Activated naive CD4-positive, alpha-beta T cell treated with anti-CD3 and anti-CD28 coated beads, Interleukin-2, amount 10 ng/mL, durations not matched to agents 7 days and 5 days (primary cell): ENCODE measurements at regions of chr10 and their contacts with region 1.

Region 1: DNA sequence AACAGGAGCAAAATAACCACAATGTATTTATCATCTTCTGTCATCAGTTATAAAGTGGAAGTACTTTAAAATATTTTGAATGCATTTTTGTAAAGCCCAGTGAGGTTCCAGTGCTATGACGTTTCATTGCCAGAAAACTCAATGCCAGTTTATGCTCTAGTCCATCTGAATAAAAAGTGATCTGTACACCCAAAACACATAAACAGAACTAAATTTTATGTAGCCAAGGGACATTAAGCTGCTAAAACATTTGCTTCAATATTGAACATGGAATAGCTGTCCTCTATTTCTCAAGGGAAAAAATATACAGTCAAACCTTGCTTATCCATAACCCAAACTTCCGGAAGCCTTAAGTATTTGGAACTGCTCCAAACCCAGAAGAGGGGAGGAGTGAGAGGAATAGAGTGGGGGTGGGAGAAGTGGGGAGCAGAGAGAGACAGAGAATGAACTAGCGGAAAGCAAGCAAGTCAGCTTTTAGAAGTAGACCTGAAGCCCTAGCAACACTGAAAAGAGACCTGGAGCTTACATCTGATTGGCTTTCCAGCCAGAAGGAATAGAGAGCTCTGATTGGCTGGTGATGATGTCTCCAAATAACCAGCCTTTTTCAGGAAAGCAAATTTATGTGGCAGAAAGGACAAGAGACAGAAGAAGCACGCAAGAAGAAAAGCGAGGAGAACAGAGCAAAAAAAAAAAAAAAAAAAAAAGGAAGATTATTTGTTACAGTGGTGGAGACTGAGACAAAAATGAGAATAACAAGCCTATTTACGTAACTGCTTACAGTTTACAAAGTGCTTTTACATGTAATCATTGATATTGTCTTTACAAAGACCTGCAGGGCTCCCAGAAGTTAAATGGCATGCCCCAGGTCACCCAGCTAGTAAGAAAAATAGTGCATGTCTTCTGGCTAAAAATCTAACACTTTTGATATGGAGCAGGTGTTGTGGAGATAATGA is 196.0 kb downstream of the RNLS start:
- DNase-seq: no peak
- H3K4me3 Mint-ChIP-seq: no peak overlapping the region
- H3K27ac Mint-ChIP-seq: no peak overlapping the region
- H3K4me1 Mint-ChIP-seq: peaks cover 24% of the 10 kb centered on the region
- H3K27me3 Mint-ChIP-seq: no peaks in the 10 kb centered on the region

Region 2: DNA sequence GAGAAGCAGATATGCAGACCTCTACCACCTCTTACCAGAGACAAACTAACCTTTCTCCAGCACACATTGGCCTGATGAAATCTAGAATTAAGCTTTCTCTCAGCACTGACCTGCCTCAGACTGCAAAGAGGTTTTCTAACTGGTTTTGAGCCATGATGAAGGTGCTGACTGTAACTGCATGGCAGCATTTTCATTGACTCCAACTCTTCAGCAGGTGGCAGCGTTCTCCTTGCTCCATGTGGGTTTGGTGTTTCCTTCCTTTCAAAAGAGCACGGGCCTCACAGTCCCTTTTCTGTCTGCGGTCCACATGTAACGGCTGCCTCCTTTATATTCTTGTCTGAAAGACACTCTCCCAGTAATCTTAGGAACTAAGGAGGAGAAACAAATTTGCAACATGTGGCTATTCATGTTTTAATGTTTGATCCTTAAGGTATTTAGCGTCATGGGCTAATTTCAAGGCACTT is 536.3 kb before region 1 on chr10:
- CTCF ChIA-PET with region 1: interaction called, 11 read pairs
- DNase-seq: peak; percentile 70
- H3K4me3 Mint-ChIP-seq: no peak overlapping the region
- H3K27ac Mint-ChIP-seq: no peak overlapping the region
- H3K4me1 Mint-ChIP-seq: peaks cover 15% of the 10 kb centered on the region
- H3K27me3 Mint-ChIP-seq: no peaks in the 10 kb centered on the region

Region 3: GRCh38 chr10:87861953-87862678 is 525.0 kb before region 1 on chr10:
- CTCF ChIA-PET with region 1: interaction called, 52 read pairs
- DNase-seq: peak; percentile 96
- H3K4me3 Mint-ChIP-seq: peak overlapping the region; percentile 93
- H3K27ac Mint-ChIP-seq: peak overlapping the region; percentile 97
- H3K4me1 Mint-ChIP-seq: peaks cover 31% of the 10 kb centered on the region
- H3K27me3 Mint-ChIP-seq: peaks cover 11% of the 10 kb centered on the region

Region 4: DNA sequence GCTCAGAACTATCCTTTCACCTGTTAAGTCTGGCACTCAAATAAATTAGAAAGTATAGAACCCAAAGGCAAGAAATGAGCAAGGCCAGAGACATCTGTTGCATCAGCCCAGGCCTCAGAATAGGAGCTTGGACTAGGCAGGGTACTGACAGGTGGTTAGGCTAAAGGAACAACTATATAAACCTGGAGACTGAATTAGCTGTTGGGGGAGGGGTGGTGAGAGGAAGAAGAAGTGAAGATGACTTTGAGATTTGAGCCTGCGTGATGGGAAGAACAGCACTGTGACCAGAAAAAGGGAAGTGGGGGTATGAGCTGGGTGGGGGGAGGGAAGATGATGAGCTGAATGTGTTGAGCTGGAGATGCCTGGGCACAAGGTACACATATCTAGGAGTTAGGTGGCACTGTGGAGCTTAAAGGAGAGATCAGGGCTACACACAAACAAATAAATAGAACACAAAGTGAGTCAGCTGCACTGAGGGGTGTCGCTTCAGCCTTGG is 278.9 kb before region 1 on chr10:
- CTCF ChIA-PET with region 1: interaction called, 21 read pairs
- DNase-seq: no peak
- H3K4me3 Mint-ChIP-seq: no peak overlapping the region
- H3K27ac Mint-ChIP-seq: no peak overlapping the region
- H3K4me1 Mint-ChIP-seq: peaks cover 10% of the 10 kb centered on the region
- H3K27me3 Mint-ChIP-seq: peaks cover 4% of the 10 kb centered on the region

Region 5: GRCh38 chr10:88114368-88114767 is 272.7 kb before region 1 on chr10:
- CTCF ChIA-PET with region 1: interaction called, 27 read pairs
- DNase-seq: peak; percentile 34
- H3K4me3 Mint-ChIP-seq: no peak overlapping the region
- H3K27ac Mint-ChIP-seq: no peak overlapping the region
- H3K4me1 Mint-ChIP-seq: peaks cover 14% of the 10 kb centered on the region
- H3K27me3 Mint-ChIP-seq: no peaks in the 10 kb centered on the region

Region 6: DNA sequence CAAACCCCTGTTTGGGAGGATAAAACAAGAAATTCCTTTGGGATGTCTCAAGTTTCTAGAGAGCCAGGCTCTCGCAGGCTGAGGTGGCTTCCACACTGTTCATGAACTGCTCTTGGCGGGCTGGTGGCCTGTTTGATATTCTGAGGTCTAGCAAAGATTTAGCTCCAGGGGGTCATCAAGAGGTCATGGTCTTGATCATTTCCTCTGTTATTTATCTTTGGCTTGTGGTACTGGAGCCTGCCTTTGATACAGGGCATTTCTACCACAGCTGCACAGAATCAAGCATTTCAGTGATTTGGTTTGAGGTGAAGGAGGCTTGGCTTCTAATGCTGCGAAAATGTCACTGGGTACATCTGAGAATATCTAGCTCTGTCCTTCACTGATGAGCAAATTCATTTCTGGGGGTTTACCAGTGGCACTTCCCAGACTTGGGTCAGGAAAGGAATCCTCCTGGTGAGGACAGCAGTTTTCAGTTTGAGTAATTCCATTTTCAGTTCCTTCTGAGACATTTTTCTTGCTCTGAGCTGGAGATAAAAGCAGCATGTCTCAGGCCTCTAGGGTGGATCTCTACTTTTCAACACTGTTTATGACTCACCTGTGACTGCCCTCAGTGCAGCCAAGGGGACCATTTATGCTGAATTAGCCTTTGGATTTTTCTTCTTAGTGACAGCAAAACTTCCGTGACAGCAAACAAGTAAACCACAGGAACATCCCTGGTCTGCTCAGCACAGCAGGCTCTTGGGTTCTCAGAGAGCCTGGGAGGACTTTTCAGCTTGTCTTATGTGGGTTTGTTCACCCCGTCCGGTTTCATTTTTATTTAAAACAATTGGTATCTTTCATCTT is 116.0 kb before region 1 on chr10:
- CTCF ChIA-PET with region 1: interaction called, 21 read pairs
- DNase-seq: peak; percentile 69
- H3K4me3 Mint-ChIP-seq: peak overlapping the region; percentile 9
- H3K27ac Mint-ChIP-seq: peak overlapping the region; percentile 93
- H3K4me1 Mint-ChIP-seq: peaks cover 52% of the 10 kb centered on the region
- H3K27me3 Mint-ChIP-seq: peaks cover 26% of the 10 kb centered on the region

Region 7: DNA sequence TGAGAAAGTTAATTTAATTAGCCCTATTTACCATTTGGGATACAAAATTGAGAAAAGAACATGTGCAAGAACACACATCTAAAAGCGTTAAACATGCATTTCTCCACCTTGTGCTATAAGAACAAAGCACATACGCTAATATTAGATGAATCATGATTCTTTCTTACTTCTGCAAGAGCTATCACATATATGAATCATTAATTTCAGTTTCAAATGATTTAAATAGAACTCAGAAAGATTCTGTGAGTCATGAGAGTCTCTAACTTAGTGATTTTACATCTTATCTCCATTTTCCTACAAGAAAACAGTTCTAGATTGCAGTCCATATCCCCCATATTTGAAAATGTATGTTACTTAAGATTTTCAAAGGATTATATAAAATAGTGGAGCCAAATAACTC is 22.1 kb after region 1 on chr10:
- CTCF ChIA-PET with region 1: no interaction called
- DNase-seq: no peak
- H3K4me3 Mint-ChIP-seq: no peak overlapping the region
- H3K27ac Mint-ChIP-seq: no peak overlapping the region
- H3K4me1 Mint-ChIP-seq: no peaks in the 10 kb centered on the region
- H3K27me3 Mint-ChIP-seq: no peaks in the 10 kb centered on the region

Region 8: DNA sequence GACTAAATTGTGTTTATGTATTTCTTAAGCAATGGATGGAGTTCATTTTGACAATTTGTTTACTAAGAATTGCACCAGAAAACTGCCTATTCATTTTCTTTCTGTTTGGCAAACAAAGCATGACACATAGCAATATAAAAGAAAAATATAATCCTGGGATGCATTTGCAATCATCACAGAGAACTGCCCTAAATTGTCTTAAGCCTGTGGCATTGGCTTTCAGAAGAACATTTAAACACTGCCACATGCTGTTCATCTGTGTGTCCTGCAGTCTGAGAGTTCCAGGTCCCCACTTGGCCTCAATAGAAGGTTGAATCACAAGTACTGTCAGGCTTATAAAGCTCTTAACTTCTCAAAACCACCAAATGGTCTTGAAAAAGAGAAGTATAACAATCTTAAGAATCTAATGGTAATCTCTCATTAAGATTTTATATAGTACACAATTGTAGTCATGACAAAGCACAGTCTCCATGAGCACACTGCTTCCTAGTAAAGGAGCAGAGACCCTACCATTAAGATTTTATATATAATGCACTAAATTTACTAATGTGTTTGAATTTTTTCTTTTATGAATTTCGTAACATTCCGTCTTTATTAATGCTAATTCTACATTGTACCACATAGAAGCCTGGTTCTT is 166.1 kb after region 1 on chr10:
- CTCF ChIA-PET with region 1: interaction called, 14 read pairs
- DNase-seq: peak; percentile 57
- H3K4me3 Mint-ChIP-seq: no peak overlapping the region
- H3K27ac Mint-ChIP-seq: no peak overlapping the region
- H3K4me1 Mint-ChIP-seq: no peaks in the 10 kb centered on the region
- H3K27me3 Mint-ChIP-seq: no peaks in the 10 kb centered on the region